Esophagus muscularis mucosa (tissue), 4 donors: ENCODE measurements at regions of chr16 and their contacts with region 1.

Region 1: GRCh38 chr16:50368410-50369132 is at the start of gene BRD7:
- DNase-seq: no peak
- H3K4me3 ChIP-seq: peak within 1 kb of the TSS; percentile 77 to 99 (median 98)
- H3K27ac ChIP-seq: peak within 1 kb of the TSS; percentile 77 to 85 (median 82)
- H3K4me1 ChIP-seq: peaks cover 30 to 68% (median 67%) of the 10 kb centered on the region in 4 donors
- H3K27me3 ChIP-seq: no peaks in the 10 kb centered on the region
- CTCF ChIP-seq: peak; percentile 48 to 81 (median 52)
- EP300 ChIP-seq: no peak
- POLR2A ChIP-seq: no peak
- total RNA-seq, gene BRD7: 49.5 to 68.1 (median 56.5) TPM

Region 2: GRCh38 chr16:50065624-50066481 is 302.7 kb before region 1 on chr16 and contains the start of gene HEATR3:
- intact Hi-C with region 1: loop called (anchors 10 kb)
- DNase-seq: peak; percentile 96
- H3K4me3 ChIP-seq: peak within 1 kb of the TSS; percentile 87 to 99 (median 96)
- H3K27ac ChIP-seq: peak within 1 kb of the TSS; percentile 95 to 99 (median 98)
- H3K4me1 ChIP-seq: peaks cover 20 to 39% (median 29%) of the 10 kb centered on the region in 4 donors
- H3K27me3 ChIP-seq: no peaks in the 10 kb centered on the region
- CTCF ChIP-seq: no peak
- EP300 ChIP-seq: no peak
- POLR2A ChIP-seq: no peak
- total RNA-seq, gene HEATR3: 10.0 to 25.7 (median 12.4) TPM

Region 3: DNA sequence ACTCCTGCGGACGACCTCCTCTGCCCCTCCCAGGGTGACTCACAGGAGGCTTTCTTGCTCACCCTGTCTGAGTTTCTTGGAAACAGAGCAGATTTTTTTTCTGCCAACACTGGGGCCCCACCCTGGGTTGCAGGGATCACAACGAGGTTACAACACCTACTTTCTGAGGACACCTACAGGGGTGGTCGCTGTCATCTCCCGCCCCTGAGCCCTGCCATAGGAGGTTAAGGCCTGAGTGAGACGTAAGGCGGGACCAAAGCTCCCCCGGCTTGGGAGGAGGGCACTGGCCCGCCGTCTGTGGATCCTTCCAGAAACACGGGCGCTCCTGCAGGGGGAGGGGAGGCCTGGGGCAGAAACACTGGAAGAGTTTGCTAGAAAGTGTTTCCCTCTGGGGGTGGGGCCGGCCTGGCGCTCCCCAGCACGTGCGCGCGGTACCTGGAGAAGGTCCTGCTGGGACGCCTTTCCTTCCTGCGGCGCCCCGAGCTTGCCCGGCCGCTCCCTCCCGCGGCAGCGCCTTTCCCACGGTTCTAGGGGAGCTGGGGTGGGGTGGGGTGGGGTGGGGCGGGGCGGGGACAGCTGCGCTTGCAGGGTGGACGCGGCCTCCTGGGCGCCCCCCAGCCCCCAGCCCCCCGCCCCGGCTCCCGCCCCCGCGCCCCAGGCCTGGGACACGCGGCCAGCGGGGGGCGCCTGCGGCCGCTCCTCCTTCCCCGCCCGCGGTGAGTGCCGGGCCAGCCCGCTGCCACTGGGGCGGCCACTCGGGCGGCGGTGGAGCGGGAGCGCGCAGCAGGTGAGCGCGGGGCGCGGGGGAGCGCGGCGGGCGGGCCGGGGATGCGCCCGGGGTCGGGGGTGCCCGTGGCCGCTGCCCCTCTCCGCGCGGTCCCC is 122.9 kb before region 1 on chr16:
- intact Hi-C with region 1: loop called (anchors 5 kb)
- DNase-seq: no peak
- H3K4me3 ChIP-seq: peak overlapping the region; percentile 68 to 72 (median 70)
- H3K27ac ChIP-seq: peak overlapping the region in 3 of 4 donors; percentile 63 to 68 (median 64)
- H3K4me1 ChIP-seq: peaks cover 4 to 31% (median 24%) of the 10 kb centered on the region in 4 donors
- H3K27me3 ChIP-seq: peaks cover 0 to 12% (median 0%) of the 10 kb centered on the region in 4 donors
- CTCF ChIP-seq: peak; percentile 21 to 50 (median 33)
- EP300 ChIP-seq: no peak
- POLR2A ChIP-seq: no peak

Region 4: GRCh38 chr16:50335196-50335958 is 33.2 kb before region 1 on chr16:
- intact Hi-C with region 1: no loop called
- DNase-seq: no peak
- H3K4me3 ChIP-seq: no peak overlapping the region
- H3K27ac ChIP-seq: peak overlapping the region; percentile 73 to 78 (median 74)
- H3K4me1 ChIP-seq: peaks cover 0 to 75% (median 48%) of the 10 kb centered on the region in 4 donors
- H3K27me3 ChIP-seq: no peaks in the 10 kb centered on the region
- CTCF ChIP-seq: no peak
- EP300 ChIP-seq: no peak
- POLR2A ChIP-seq: no peak

Region 5: GRCh38 chr16:50627419-50627818 is 258.8 kb after region 1 on chr16:
- intact Hi-C with region 1: loop called (anchors 5 kb)
- DNase-seq: peak; percentile 94
- H3K4me3 ChIP-seq: no peak overlapping the region
- H3K27ac ChIP-seq: peak overlapping the region; percentile 44 to 66 (median 50)
- H3K4me1 ChIP-seq: peaks cover 11 to 41% (median 33%) of the 10 kb centered on the region in 4 donors
- H3K27me3 ChIP-seq: no peaks in the 10 kb centered on the region
- CTCF ChIP-seq: peak; percentile 44 to 72 (median 60)
- EP300 ChIP-seq: no peak
- POLR2A ChIP-seq: no peak

Region 6: DNA sequence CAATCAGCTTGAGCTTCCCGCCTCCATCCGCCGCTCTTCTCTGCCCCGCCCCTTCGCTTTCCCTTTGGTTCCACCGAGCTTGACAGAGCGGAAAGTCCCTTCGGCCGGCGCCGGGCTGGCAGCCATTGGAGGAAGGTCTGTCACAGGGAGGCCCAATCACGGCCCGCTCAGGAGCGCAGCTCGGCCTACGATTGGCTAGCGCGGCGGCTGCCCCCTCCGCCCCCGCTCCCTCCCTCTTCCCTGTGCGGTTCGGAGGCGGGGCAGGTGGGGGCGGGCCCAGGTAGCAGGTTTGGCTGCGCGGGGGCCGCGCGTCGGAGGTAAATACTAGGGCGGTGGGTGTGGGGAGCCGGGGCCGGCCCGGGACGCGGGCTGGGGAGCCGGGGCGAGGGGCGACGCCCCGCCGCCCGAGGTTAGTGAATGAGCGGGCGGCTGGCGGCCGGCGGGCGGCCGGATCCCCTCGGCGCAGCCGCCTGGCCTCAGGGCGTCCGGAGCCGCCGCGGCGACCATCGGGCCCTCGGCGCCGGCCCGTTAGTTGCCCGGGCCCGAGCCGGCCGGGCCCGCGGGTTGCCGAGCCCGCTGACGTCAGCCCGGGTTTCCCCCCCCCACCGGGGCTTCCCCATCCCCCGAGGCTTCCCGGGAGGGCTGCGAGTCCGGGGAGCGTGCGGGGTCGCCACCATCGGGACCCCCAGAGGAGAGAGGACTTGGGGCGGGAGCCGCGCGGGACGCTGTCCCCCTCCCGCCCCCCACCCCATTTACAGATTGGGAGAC is 373.4 kb after region 1 on chr16 and contains the start of gene CYLD:
- intact Hi-C with region 1: loop called (anchors 5 kb)
- DNase-seq: peak; percentile 100
- H3K4me3 ChIP-seq: peak within 1 kb of the TSS; percentile 90 to 99 (median 99)
- H3K27ac ChIP-seq: peak within 1 kb of the TSS; percentile 91 to 96 (median 94)
- H3K4me1 ChIP-seq: peaks cover 19 to 51% (median 47%) of the 10 kb centered on the region in 4 donors
- H3K27me3 ChIP-seq: no peaks in the 10 kb centered on the region
- CTCF ChIP-seq: no peak
- EP300 ChIP-seq: no peak
- POLR2A ChIP-seq: no peak
- total RNA-seq, gene CYLD: 40.1 to 46.4 (median 40.8) TPM

Region 7: GRCh38 chr16:51084074-51084928 is 715.7 kb after region 1 on chr16:
- intact Hi-C with region 1: no loop called
- DNase-seq: no peak
- H3K4me3 ChIP-seq: no peak overlapping the region
- H3K27ac ChIP-seq: no peak overlapping the region
- H3K4me1 ChIP-seq: no peaks in the 10 kb centered on the region
- H3K27me3 ChIP-seq: peaks cover 0 to 7% (median 0%) of the 10 kb centered on the region in 4 donors
- CTCF ChIP-seq: no peak
- EP300 ChIP-seq: no peak
- POLR2A ChIP-seq: no peak